CD4-positive, alpha-beta T cell (primary cell): ENCODE measurements at regions of chr2 and their contacts with region 1.

Region 1: GRCh38 chr2:196750982-196751635 is 48.4 kb downstream of the GTF3C3 start:
- DNase-seq: peak; percentile 31 to 76 (median 46)
- ATAC-seq: peak; percentile 89
- H3K4me3 ChIP-seq: no peak overlapping the region
- H3K4me3 Mint-ChIP-seq: no peak overlapping the region
- H3K27ac ChIP-seq: no peak overlapping the region
- H3K27ac Mint-ChIP-seq: no peak overlapping the region
- H3K4me1 ChIP-seq: peaks cover 4% of the 10 kb centered on the region
- H3K4me1 Mint-ChIP-seq: peaks cover 6% of the 10 kb centered on the region
- H3K27me3 ChIP-seq: no peaks in the 10 kb centered on the region
- H3K27me3 Mint-ChIP-seq: no peaks in the 10 kb centered on the region
- CTCF ChIP-seq: peak; percentile 73

Region 2: GRCh38 chr2:197777823-197778407 is 1026.8 kb after region 1 on chr2:
- CTCF ChIA-PET with region 1: no interaction called
- POLR2A ChIA-PET with region 1: no interaction called
- intact Hi-C with region 1: loop called in 1 of 2 experiments (anchors 5 kb)
- DNase-seq: peak in 4 of 14 experiments; percentile 46 to 58 (median 50)
- ATAC-seq: no peak
- H3K4me3 ChIP-seq: no peak overlapping the region
- H3K4me3 Mint-ChIP-seq: no peak overlapping the region
- H3K27ac ChIP-seq: no peak overlapping the region
- H3K27ac Mint-ChIP-seq: no peak overlapping the region
- H3K4me1 ChIP-seq: no peaks in the 10 kb centered on the region
- H3K4me1 Mint-ChIP-seq: no peaks in the 10 kb centered on the region
- H3K27me3 ChIP-seq: no peaks in the 10 kb centered on the region
- H3K27me3 Mint-ChIP-seq: peaks cover 18% of the 10 kb centered on the region
- CTCF ChIP-seq: peak; percentile 89